ENCODE measurements at regions of chr19 and their contacts with region 1.

Region 1: GRCh38 chr19:55117636-55118391 is at the start of gene PPP1R12C:
- H3K4me3 ChIP-seq: peak within 1 kb of the TSS; percentile 78
- H3K27ac ChIP-seq: peak within 1 kb of the TSS; percentile 78; the same call in 1 of the 2 replicates
- H3K4me1 ChIP-seq: peaks cover 18% of the 10 kb centered on the region
- CTCF ChIP-seq: 0 out of 2 replicates have a peak, but pooled peaks have one; percentile 29

Region 2: DNA sequence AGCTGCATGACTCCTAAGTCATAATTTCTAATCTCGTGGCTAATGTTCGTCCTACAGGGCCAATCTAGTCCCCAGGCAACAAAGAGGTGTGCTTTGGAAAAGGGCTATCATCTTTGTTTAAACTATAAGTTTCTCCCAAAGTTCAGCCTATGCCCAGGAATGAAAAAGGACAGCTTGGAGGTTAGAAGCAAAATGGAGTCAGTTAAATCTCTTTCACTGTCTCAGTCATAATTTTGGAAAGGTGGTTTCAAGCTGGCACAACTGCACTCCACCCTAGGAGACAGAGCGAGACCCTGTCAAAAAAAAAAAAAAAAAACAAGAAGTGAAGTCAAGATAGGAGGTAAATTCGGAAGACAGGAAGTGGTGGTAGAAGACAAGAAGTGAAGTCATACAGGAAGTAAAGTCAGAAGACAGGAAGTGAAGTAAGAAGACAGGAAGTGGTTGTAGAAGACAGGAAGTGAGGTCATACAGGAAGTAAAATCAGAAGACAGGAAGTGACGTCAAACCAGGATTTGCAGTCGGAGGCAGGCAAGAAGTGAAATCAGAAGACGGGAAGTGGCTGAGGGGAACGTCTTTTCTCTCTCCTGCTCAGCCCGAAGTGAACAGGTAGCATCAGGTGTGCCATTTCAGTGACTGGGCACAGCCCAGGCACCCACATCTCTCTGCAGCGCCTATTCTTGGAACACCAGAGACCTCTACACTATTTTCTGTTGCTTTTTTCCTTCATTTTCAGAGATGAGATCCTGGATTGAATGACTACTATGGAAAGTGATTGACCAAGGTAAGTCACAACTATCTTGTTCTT is 111.9 kb before region 1 on chr19:
- CTCF ChIA-PET with region 1: no interaction called
- POLR2A ChIA-PET with region 1: no interaction called
- H3K4me3 ChIP-seq: peak overlapping the region; percentile 61
- H3K27ac ChIP-seq: no peak overlapping the region
- H3K4me1 ChIP-seq: no peaks in the 10 kb centered on the region
- CTCF ChIP-seq: no peak

Region 3: GRCh38 chr19:55068950-55069855 is 48.6 kb before region 1 on chr19:
- CTCF ChIA-PET with region 1: no interaction called
- POLR2A ChIA-PET with region 1: interaction called, 16 read pairs
- H3K4me3 ChIP-seq: peak overlapping the region; percentile 43
- H3K27ac ChIP-seq: no peak overlapping the region
- H3K4me1 ChIP-seq: peaks cover 4% of the 10 kb centered on the region; the same call in 1 of the 2 replicates
- CTCF ChIP-seq: no peak

Region 4: DNA sequence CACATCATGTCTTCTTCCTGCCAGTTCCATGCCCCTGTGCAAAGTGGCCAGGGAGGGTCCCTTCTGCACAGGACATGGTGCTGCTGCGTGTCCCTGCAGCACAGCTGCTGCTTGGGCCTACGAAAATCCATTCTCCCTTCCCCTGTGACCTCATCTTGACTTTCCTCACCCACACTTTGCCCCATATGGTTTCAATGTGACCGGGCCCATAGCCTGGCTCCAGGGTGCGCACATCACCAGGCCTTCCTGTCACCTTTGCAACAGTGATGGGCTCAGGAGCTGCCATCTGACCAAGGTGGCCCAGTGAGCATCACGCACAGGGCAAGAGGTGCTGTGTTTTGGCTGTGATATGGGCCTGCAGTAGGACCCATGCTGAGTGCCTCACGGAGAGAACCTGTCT is 11.2 kb before region 1 on chr19:
- CTCF ChIA-PET with region 1: interaction called, 3 read pairs
- POLR2A ChIA-PET with region 1: interaction called, 11 read pairs
- H3K4me3 ChIP-seq: no peak overlapping the region
- H3K27ac ChIP-seq: no peak overlapping the region
- H3K4me1 ChIP-seq: no peaks in the 10 kb centered on the region
- CTCF ChIP-seq: no peak

Region 5: GRCh38 chr19:55369671-55370304 is 252.0 kb after region 1 on chr19:
- CTCF ChIA-PET with region 1: interaction called, 10 read pairs
- POLR2A ChIA-PET with region 1: no interaction called
- H3K4me3 ChIP-seq: peak overlapping the region; percentile 48
- H3K27ac ChIP-seq: no peak overlapping the region
- H3K4me1 ChIP-seq: peaks cover 5% of the 10 kb centered on the region; the same call in 1 of the 2 replicates
- CTCF ChIP-seq: no peak